Right cardiac atrium (tissue), 5 donors: ENCODE measurements at regions of chr10 and their contacts with region 1.

Region 1: DNA sequence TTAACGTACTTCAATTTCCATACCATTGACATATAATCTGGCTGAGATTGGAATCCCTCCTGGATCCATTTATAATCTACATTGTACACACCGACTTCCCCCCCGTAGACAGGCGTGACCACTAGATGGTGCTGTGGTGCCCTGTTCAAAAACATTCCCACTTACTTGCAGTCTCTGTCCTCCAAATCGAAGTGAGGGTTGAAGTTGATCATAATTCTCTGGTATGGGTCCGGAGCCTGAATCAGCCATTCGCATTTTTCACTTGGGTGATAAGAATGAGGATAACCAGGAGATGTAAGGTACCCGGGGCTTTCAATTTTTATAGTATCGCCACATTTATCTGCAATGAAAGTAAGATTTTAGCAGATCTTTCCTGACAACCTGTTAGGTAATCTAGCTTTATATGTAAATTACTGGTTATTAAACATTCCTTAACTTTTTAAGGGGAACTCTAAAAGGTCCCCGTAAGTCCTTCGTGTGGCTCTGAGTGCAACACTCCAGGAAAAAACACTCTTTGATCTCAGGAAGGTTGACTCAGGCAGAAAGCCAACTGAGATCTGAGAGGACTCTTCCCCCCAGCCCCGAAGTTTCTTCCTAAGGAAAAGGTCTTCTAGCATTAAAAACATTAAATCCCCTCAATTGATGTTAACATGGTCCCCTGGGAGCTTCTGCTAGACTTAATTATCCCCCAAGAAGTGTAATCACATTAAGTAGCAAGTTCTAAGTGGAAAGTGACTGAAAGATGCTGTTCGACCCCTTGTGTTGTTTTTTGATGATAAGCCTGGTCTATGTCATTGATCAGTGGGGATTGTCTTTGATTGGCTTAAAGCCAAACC is 3.7 kb downstream of the NRP1 start:
- DNase-seq: peak; percentile 86 to 94 (median 92)
- ATAC-seq: peak; percentile 18 to 20
- H3K4me3 ChIP-seq: peak overlapping the region; percentile 94
- H3K27ac ChIP-seq: no peak overlapping the region
- H3K4me1 ChIP-seq: peaks cover 2% of the 10 kb centered on the region
- H3K27me3 ChIP-seq: no peaks in the 10 kb centered on the region

Region 2: GRCh38 chr10:33193057-33193700 is 137.6 kb before region 1 on chr10:
- intact Hi-C with region 1: loop called in 3 of 4 experiments (anchors 5 to 10 kb)
- DNase-seq: peak; percentile 85 to 92 (median 88)
- ATAC-seq: peak; percentile 84 to 89
- H3K4me3 ChIP-seq: no peak overlapping the region
- H3K27ac ChIP-seq: peak overlapping the region; percentile 43
- H3K4me1 ChIP-seq: peaks cover 9% of the 10 kb centered on the region
- H3K27me3 ChIP-seq: no peaks in the 10 kb centered on the region

Region 3: GRCh38 chr10:33460505-33461294 is 129.9 kb after region 1 on chr10:
- intact Hi-C with region 1: loop called in 1 of 4 experiments (anchors 10 kb)
- DNase-seq: peak; percentile 66 to 87 (median 78)
- ATAC-seq: peak; percentile 89 to 96
- H3K4me3 ChIP-seq: no peak overlapping the region
- H3K27ac ChIP-seq: peak overlapping the region; percentile 45
- H3K4me1 ChIP-seq: peaks cover 3% of the 10 kb centered on the region
- H3K27me3 ChIP-seq: no peaks in the 10 kb centered on the region

Region 4: DNA sequence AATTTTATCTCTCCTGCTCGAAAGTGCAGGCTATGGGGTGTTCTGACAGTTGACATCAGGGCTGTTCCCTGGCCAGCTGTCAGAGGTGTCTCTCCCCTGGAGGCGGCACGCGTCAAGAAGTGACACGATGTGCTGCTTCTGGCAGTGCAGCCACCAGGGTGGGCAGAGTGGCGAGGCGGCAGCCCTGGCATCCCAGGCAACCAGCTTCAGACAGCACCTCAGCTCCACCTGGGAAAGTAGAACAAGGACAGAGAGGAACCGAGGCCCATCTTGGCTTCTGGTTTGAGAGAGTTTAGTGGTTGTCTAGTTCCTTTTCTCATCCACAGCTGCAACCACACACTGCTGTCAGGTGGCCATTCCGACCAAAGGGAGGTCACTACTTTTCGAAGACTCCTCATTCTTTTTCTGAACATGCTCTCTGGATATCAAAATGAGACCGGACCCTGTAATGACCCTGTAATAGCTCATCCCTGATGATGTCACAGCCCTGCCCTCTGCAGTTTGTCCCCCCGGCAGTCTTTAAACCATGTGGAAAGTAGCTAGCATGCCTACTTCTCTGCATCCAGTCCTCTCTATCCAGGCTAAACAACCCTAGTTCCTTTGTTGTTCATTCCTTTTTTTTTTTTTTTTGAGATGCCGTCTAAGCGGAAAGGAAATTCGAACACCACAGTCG is 384.7 kb after region 1 on chr10:
- intact Hi-C with region 1: loop called in 1 of 4 experiments (anchors 10 kb)
- DNase-seq: peak; percentile 41 to 77 (median 67)
- ATAC-seq: peak; percentile 80 to 82
- H3K4me3 ChIP-seq: no peak overlapping the region
- H3K27ac ChIP-seq: no peak overlapping the region
- H3K4me1 ChIP-seq: peaks cover 8% of the 10 kb centered on the region
- H3K27me3 ChIP-seq: no peaks in the 10 kb centered on the region

Region 5: DNA sequence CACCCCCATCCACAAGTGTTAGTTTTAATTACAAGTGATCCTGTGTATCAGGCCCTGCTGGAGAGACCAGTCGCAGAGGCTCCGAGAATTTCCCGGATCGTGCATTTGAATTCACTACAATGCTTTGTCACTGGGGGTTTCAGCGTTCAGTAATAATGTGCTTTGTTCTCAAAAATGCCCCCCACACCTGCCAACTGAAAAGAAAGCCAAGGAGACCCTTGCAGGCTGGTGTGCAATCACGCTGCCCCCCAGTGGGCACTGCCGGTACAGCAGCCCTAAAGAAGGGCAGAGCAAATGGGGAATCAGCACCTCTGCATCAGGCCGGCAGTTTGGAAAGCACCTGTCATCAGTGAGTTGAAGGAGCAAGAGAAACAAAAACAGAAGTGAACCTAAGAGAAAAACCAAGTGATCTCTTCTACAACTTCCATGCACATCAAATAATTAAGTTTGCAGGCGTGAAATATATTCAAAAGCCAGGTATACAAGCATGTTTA is 1306.7 kb after region 1 on chr10:
- intact Hi-C with region 1: loop called in 3 of 4 experiments (anchors 5 to 10 kb)
- DNase-seq: peak; percentile 54 to 88 (median 84)
- ATAC-seq: peak in 1 of 2 donors; percentile 62
- H3K4me3 ChIP-seq: no peak overlapping the region
- H3K27ac ChIP-seq: no peak overlapping the region
- H3K4me1 ChIP-seq: no peaks in the 10 kb centered on the region
- H3K27me3 ChIP-seq: no peaks in the 10 kb centered on the region